AG04450 (cell line): ENCODE measurements at regions of chr12 and their contacts with region 1.

Region 1: DNA sequence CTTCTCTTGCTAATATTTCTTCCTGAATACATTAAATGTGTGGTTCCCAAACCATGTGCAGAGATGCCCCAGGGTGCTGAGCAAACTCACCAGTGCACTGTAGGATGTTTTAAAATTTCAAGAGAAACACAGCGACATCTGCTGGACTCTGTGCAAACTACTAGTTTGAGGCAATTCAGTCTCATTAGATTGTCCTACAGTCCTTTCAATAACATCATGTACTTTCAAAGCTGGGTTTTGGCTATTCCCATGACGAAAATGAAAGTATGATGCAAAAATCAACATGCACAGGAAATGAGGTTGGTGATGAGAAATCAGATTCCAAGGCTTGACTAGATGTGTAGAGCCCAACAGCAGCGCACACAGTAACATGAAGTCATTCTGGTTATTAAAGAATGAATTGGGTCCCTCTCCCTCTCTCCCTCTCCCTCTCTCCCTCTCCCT is 66.3 kb downstream of the CLIP1 start:
- DNase-seq: peak; percentile 37
- H3K4me3 ChIP-seq: no peak overlapping the region
- H3K27ac ChIP-seq: no peak overlapping the region
- H3K27me3 ChIP-seq: no peaks in the 10 kb centered on the region
- CTCF ChIP-seq: peak; percentile 78

Region 2: DNA sequence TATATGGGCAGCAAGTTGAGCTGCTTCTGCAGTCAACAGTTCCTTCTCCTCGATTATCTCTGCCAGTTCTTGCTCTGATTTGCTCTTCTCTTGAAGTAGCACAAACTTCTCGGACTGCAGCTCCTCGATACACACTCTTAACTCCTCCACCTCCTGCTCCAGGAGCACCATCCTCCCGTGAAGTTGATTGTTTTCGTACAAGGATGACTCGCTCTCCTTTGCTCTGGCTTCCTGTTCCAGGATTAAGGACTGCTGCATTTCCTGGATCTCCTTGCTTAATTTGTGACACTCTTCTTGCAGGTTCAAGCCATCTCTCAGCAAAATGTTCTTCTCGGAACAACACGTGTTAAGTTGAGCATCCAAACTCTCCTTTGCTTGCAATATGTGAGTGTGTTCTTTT is 33.7 kb before region 1 on chr12:
- CTCF ChIA-PET with region 1: interaction called, 21 read pairs
- POLR2A ChIA-PET with region 1: no interaction called
- DNase-seq: no peak
- H3K4me3 ChIP-seq: no peak overlapping the region
- H3K27ac ChIP-seq: no peak overlapping the region
- H3K27me3 ChIP-seq: no peaks in the 10 kb centered on the region
- CTCF ChIP-seq: no peak

Region 3: DNA sequence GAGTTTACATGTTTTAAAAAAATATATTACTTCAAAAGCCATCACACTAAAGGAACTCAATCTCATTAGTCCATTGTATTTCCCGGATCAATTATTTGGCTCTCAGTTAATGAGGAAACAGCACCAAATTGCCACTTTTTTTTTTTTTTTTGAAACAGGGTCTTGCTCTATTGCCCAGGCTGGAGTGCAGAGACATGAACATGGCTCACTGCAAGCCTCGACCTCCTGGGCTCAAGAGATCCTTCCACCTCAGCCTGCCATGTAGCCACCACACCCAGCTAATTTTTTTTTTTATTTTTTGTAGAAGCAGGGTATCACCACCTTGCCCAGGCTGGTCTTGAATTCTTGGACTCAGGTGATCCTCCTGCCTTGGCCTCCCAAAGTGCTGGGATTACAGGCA is 11.2 kb before region 1 on chr12:
- CTCF ChIA-PET with region 1: interaction called, 28 read pairs
- POLR2A ChIA-PET with region 1: interaction called, 4 read pairs
- DNase-seq: no peak
- H3K4me3 ChIP-seq: no peak overlapping the region
- H3K27ac ChIP-seq: no peak overlapping the region
- H3K27me3 ChIP-seq: no peaks in the 10 kb centered on the region
- CTCF ChIP-seq: no peak

Region 4: DNA sequence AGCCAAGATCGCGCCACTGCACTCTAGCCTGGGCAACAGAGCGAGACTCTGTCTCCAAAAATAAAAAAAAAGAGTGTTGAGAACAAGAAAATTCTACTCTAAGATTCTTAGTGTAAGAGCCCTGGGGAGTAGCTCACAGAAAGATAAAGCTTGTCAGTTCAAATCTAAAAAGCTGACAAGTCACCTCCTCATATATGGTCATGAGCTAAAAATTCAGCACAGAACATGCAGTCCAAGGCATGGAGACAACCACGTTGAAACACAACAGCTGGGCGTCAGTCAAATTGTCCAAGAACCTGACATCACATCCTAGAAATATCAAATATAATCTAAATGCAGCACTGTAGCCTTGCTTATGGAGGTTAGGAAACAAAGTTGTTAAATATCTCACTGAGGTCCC is 18.5 kb after region 1 on chr12:
- CTCF ChIA-PET with region 1: interaction called, 36 read pairs
- POLR2A ChIA-PET with region 1: no interaction called
- DNase-seq: no peak
- H3K4me3 ChIP-seq: no peak overlapping the region
- H3K27ac ChIP-seq: no peak overlapping the region
- H3K27me3 ChIP-seq: no peaks in the 10 kb centered on the region
- CTCF ChIP-seq: no peak